ENCODE measurements at regions of chr3 and their contacts with region 1.

Region 1: GRCh38 chr3:112519424-112520001 is 20.2 kb upstream of the BTLA start:
- DNase-seq: peak in 1 of 10 donors; percentile 26

Region 2: DNA sequence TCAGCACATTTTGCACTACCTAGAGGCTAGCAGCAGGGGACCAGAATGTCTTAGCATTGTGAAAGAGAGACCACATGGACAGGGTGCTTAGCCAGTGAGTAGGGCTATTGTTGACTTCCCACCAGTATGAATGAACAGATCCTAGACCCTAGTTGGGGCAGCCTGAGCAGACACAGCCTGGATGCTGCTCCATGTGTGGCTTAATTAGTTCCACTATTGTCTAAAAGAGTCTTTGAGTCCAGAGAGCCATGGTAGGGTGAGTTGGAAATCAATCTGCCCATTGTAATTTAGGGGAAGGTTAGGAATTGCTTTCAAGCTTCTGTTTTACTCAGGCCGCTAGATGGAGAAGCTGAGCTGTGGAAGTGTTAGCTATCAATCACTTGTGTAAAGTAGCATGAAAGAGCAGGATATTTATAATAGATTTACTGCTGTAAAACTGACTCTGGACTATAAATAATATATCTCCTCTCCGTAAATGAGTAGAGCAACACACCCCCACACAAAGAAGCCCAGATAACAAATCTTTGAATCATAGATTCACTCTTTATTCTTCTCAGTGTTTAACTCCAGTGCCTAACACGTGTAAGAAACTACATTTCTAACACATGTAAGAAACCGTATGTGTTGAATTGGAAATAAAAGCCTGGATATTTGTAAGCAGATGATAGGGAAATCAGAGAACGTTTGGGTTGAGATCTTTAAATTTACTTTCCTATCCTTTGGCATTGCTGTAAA is 382.4 kb before region 1 on chr3:
- intact Hi-C with region 1: loop called (anchors 5 kb)
- DNase-seq: peak in 5 of 10 donors; percentile 8 to 51 (median 34)

Region 3: GRCh38 chr3:112293368-112294321 is 225.9 kb before region 1 on chr3 and contains the start of gene SLC9C1:
- intact Hi-C with region 1: loop called (anchors 1 kb)
- DNase-seq: peak in 2 of 10 donors; percentile 32 to 47

Region 4: GRCh38 chr3:112327371-112327951 is 192.1 kb before region 1 on chr3:
- intact Hi-C with region 1: loop called (anchors 1 kb)
- DNase-seq: peak in 1 of 10 donors; percentile 37

Region 5: GRCh38 chr3:112568642-112569041 is 49.1 kb after region 1 on chr3:
- intact Hi-C with region 1: no loop called
- DNase-seq: no peak

Measured in posterior cingulate gyrus (tissue), 11 donors.